Lower leg skin (tissue), 4 donors: ENCODE measurements at regions of chr12 and their contacts with region 1.

Region 1: DNA sequence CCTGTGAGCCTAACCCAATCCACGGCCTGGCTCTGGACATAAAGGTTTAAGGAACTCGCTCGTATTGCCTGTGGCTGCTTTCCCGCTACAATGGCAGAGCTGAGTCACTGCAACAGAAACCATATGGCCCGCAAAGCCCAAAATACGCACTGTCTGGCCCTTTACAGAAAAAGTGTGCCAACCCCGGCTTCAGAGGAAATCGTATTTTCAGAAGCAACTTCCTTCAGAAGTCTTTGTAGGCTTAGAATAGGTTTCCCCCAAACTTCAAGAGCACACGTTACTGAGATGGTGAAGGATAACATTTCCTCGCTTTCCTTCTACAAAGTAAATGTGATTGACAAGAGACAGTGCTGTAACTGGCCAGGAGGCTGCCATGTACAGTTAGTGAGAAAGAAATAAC is 34.8 kb upstream of the TESC start:
- DNase-seq: no peak
- H3K4me3 ChIP-seq: no peak overlapping the region
- CTCF ChIP-seq: no peak
- POLR2A ChIP-seq: no peak

Region 2: GRCh38 chr12:116559162-116559935 is 574.7 kb before region 1 on chr12 and contains the start of gene MAP1LC3B2:
- intact Hi-C with region 1: loop called (anchors 10 kb)
- DNase-seq: peak; percentile 81 to 92
- H3K4me3 ChIP-seq: no peak within 1 kb of the TSS
- CTCF ChIP-seq: no peak
- POLR2A ChIP-seq: no peak
- total RNA-seq, gene MAP1LC3B2: 2.1 to 2.5 (median 2.3) TPM in 3 of 4 donors, not detected in the other

Region 3: DNA sequence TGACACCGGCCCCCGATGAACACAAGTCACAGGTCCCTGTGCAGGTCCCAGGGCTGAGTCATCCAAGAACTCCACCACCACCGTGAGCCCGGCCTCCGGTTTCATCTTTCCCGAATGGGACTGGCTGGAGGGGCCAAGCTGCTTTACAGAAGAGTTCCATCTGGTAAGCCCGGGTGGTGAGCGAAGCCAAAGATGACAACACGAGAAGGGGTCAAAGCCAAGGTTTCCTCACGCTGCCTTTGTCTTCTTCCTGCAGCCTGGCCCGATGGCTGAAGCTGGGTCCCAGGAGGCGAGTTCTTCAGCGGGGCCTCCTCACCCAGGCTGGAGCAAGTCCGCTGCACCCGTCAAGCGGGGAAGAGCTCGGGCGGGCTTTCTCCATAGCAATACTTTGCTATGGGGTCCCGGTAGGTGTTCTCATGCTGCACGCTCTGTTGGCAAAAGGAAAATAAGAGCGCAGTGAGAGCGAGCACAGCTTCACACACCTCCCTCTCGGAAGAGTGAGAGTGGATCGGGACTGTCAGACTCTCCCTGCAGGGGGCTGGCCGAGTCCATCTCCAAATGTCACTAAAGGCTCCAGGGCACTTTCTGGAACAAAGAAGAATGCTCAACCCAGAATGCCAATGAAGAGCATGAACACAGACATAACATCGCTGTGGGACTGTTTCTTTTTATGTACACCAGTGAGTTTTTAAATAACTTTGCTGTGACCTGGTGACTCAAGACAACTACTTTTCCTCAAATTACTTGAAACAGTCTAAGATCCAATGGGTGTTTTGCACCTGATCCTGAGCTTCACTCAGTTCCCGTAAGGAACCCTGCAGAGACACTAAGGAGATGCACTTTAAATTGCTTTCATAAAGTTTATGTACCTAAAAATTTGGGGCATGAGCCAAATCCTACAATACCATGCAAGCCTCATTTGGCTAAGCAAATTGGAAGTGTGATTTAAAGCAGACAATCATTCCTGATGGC is 416.3 kb before region 1 on chr12:
- intact Hi-C with region 1: no loop called
- DNase-seq: peak; percentile 52 to 93
- H3K4me3 ChIP-seq: no peak overlapping the region
- CTCF ChIP-seq: no peak
- POLR2A ChIP-seq: no peak

Region 4: DNA sequence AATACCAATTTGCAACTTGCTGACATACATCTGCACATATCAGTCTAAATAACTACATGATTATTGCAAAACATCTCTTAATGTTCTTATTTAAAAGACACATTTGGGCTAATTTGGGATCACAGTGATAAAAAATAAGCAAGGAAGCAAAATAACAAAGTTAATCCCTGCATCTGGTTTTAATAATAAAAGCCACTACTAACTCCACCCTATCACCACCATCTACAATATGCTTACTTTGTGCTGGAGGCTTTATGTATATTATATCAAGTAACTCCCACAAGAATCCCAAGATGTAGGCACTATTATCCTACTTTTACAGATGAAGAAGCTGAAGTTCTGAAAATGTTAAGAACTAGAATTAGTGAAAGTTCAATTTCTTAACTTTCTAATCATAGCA is 1192.9 kb after region 1 on chr12:
- intact Hi-C with region 1: no loop called
- DNase-seq: no peak
- H3K4me3 ChIP-seq: no peak overlapping the region
- CTCF ChIP-seq: no peak
- POLR2A ChIP-seq: no peak